ENCODE measurements at regions of chr7 and their contacts with region 1.

Region 1: DNA sequence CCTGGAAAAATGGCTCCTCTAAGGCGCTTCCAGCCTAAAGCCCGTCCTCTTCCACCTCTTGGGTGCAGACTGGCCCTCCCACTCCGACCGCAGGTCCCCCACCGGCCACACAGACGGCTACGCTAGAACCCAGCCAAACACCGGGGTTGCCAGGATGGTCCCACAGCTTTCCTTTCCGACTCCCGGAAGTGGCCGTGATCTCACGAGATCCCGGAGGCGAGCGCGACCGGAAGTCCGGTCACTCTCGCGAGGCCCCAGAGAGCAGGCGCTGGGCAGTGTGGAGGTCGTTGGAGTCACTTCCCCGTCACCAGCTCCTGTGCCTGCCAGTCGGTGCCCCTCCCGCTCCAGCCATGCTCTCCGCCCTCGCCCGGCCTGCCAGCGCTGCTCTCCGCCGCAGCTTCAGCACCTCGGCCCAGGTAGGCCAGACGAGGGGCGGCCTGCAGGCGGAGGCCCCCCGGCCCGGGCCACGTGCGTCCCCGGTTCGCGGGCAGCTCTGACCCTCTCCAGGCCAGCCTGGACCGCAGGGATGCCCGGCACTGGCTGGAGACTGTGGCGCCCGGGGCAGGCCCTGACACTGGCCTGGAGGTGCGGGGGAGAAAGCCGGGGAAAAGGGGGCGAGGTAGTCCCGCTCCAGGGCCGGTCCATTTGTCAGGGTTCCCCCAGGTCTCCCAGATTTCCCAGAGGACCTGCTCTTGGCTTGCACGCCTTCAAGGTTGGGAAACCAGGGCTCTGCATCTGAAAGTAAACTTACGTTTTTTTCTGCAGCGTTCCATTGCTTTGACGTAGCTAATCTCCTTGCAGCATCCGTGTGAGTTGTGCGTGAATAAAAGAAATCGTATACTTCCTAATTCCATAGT is at the starts of genes MDH2 and STYXL1:
- DNase-seq: peak; percentile 79
- ATAC-seq: peak; percentile 99
- H3K4me3 ChIP-seq: peak within 1 kb of the TSS; percentile 98 to 99
- H3K27ac ChIP-seq: peak within 1 kb of the TSS; percentile 94
- H3K4me1 ChIP-seq: peaks cover 10% of the 10 kb centered on the region
- H3K27me3 ChIP-seq: no peaks in the 10 kb centered on the region
- CTCF ChIP-seq: no peak
- total RNA-seq, gene MDH2: 365 TPM
- total RNA-seq, gene STYXL1: 57.6 TPM

Region 2: DNA sequence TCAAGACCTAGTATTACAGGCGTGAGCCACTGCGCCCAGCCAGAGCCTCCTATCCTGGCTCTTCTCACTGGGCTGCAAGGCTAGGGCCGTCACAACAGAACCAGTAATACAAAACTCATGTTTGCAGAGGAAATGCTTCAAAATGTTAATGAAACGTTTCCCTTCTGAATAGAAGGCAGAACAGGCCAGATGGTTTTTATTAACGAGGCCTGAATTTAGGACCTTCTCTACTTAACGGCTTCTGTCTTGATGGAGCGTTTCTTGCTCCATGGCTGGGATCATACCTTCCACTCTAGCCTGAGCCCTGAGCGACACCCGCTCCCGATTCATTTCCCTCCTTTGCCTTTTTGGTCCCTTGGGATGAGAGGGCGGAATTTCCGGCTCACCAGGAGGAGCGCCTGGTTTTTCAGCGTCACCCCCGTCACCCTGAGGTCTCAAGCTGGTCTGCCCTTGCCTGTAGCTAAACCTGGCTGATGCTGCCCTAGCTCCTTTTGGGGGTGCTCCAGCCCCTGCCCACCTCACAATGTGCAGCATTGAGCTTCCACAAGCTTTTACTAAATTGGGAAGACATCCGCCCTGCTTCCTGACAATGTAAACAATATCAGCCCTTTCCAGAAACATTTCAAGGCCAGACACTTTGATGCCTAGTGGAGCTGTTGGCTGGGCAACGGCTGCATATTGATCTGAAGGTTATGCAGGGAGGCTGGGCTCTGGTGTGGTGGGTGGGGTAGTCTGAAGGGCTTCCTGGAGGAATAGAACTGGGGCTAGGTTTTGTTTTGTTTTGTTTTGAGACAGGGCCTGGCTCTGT is 1753.6 kb before region 1 on chr7:
- CTCF ChIA-PET with region 1: no interaction called
- POLR2A ChIA-PET with region 1: interaction called, 11 read pairs
- in situ Hi-C with region 1: no loop called
- intact Hi-C with region 1: no loop called
- DNase-seq: no peak
- ATAC-seq: no peak
- H3K4me3 ChIP-seq: no peak overlapping the region
- H3K27ac ChIP-seq: 0 out of 2 replicates have a peak overlapping the region, but pooled peaks have one; percentile 9
- H3K4me1 ChIP-seq: peaks cover 31% of the 10 kb centered on the region
- H3K27me3 ChIP-seq: no peaks in the 10 kb centered on the region
- CTCF ChIP-seq: no peak

Region 3: GRCh38 chr7:75555736-75556135 is 492.3 kb before region 1 on chr7:
- CTCF ChIA-PET with region 1: no interaction called
- POLR2A ChIA-PET with region 1: no interaction called
- in situ Hi-C with region 1: no loop called
- intact Hi-C with region 1: no loop called
- DNase-seq: no peak
- ATAC-seq: no peak
- H3K4me3 ChIP-seq: no peak overlapping the region
- H3K27ac ChIP-seq: no peak overlapping the region
- H3K4me1 ChIP-seq: no peaks in the 10 kb centered on the region
- H3K27me3 ChIP-seq: no peaks in the 10 kb centered on the region
- CTCF ChIP-seq: no peak

Region 4: DNA sequence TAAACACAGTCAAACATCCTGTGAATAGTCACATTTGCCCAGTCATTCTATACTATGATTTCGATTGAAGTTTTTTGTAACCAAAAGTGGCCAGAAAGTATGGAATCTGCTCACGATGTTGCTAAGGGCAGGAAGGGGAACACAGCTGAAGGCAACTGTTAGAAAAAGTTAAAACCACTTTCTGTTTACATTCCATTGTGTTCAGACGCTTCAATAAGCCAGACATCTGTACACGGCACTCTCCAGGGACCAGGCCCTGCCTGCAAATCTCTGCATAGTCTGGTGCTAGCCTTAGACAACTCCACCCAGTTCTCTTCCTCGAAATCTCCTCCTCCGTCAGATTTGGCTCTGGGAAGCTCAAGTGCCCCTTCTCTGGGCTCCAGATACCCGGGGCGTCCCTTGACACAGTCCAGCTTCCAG is 36.6 kb before region 1 on chr7:
- CTCF ChIA-PET with region 1: no interaction called
- POLR2A ChIA-PET with region 1: no interaction called
- in situ Hi-C with region 1: no loop called
- intact Hi-C with region 1: no loop called
- DNase-seq: no peak
- ATAC-seq: no peak
- H3K4me3 ChIP-seq: no peak overlapping the region
- H3K27ac ChIP-seq: no peak overlapping the region
- H3K4me1 ChIP-seq: no peaks in the 10 kb centered on the region
- H3K27me3 ChIP-seq: no peaks in the 10 kb centered on the region
- CTCF ChIP-seq: no peak

Region 5: GRCh38 chr7:76166404-76167255 is 118.6 kb after region 1 on chr7:
- CTCF ChIA-PET with region 1: no interaction called
- POLR2A ChIA-PET with region 1: no interaction called
- in situ Hi-C with region 1: no loop called
- intact Hi-C with region 1: no loop called
- DNase-seq: peak; percentile 92
- ATAC-seq: peak; percentile 97
- H3K4me3 ChIP-seq: peak overlapping the region; percentile 65 to 75
- H3K27ac ChIP-seq: peak overlapping the region; percentile 85
- H3K4me1 ChIP-seq: no peaks in the 10 kb centered on the region
- H3K27me3 ChIP-seq: no peaks in the 10 kb centered on the region
- CTCF ChIP-seq: no peak

Measured in Panc1 (cell line).